ENCODE measurements at regions of chr11 and their contacts with region 1.

Region 1: GRCh38 chr11:63945477-63946163 is 6.8 kb downstream of the NAA40 start:
- DNase-seq: peak; percentile 65 to 78
- ATAC-seq: peak; percentile 88
- H3K4me3 ChIP-seq: peak overlapping the region; percentile 21 to 43 (median 36)
- H3K27ac ChIP-seq: peak overlapping the region; percentile 77 to 91 (median 84)
- H3K4me1 ChIP-seq: peaks cover 24 to 25% of the 10 kb centered on the region in 2 donors
- H3K27me3 ChIP-seq: no peaks in the 10 kb centered on the region
- CTCF ChIP-seq: peak; percentile 79 to 90 (median 85)
- POLR2A ChIP-seq: no peak

Region 2: GRCh38 chr11:63671322-63672155 is 274.1 kb before region 1 on chr11 and contains the start of gene ATL3:
- in situ Hi-C with region 1: no loop called
- intact Hi-C with region 1: loop called (anchors 10 kb)
- DNase-seq: peak; percentile 97 to 98
- ATAC-seq: peak; percentile 88 to 91
- H3K4me3 ChIP-seq: peak within 1 kb of the TSS; percentile 78 to 92 (median 85)
- H3K27ac ChIP-seq: peak within 1 kb of the TSS; percentile 96 to 98 (median 97)
- H3K4me1 ChIP-seq: peaks cover 46 to 48% of the 10 kb centered on the region in 2 donors
- H3K27me3 ChIP-seq: no peaks in the 10 kb centered on the region
- CTCF ChIP-seq: peak in 2 of 5 experiments; percentile 12 to 23
- POLR2A ChIP-seq: peak; percentile 75
- total RNA-seq, gene ATL3: 10.2 to 16.5 (median 12.4) TPM

Region 3: GRCh38 chr11:63768237-63769043 is 177.2 kb before region 1 on chr11 and contains the start of gene ZFTA:
- in situ Hi-C with region 1: loop called in 1 of 4 experiments (anchors 10 kb)
- intact Hi-C with region 1: loop called (anchors 1 kb)
- DNase-seq: peak in 1 of 2 donors; percentile 31
- ATAC-seq: peak; percentile 60 to 70
- H3K4me3 ChIP-seq: peak within 1 kb of the TSS; percentile 67 to 83 (median 72)
- H3K27ac ChIP-seq: peak within 1 kb of the TSS; percentile 69 to 81 (median 77)
- H3K4me1 ChIP-seq: peaks cover 10 to 13% of the 10 kb centered on the region in 2 donors
- H3K27me3 ChIP-seq: no peaks in the 10 kb centered on the region
- CTCF ChIP-seq: peak in 4 of 5 experiments; percentile 90 to 97 (median 95)
- POLR2A ChIP-seq: no peak
- total RNA-seq, gene ZFTA: 6.9 to 18.6 (median 11.8) TPM

Region 4: DNA sequence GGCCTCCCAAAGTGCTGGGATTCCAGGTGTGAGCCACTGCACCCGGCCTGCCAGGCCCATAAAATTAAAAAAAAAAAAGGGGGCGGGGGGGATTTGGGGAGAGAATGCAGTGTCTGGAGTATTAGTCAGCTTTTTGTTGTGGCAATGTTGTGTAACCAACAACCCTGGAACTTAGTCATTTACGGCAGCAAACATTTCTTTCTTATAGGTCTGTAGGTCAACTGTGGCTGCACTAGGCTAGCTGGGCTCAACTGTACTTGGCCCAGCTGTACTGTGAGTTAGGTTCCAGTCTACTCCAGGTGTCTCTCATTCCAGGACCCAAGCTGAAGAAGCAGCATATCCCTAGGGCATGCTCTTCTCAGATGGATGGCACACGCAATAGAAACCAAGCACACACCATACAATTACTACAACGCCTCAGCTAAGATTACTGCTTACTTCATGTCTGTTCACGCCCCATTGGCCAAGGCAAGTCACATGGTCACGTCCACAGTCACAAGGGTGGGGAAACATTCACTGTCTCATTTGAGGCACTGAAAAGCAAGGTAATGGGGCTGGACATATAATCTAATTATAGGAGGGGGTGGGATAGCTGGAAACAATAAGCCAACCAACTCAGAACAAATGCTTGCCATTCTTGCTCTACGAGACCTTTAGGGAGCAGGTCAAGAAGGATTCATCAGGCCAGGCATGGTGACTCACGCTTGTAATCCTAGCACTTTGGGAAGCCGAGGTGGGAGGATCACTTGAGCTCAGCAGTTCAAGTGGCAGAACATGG is 142.8 kb before region 1 on chr11:
- in situ Hi-C with region 1: no loop called
- intact Hi-C with region 1: no loop called
- DNase-seq: peak in 1 of 2 donors; percentile 36
- ATAC-seq: peak; percentile 26 to 91
- H3K4me3 ChIP-seq: no peak overlapping the region
- H3K27ac ChIP-seq: no peak overlapping the region
- H3K4me1 ChIP-seq: peaks cover 0 to 5% of the 10 kb centered on the region in 2 donors
- H3K27me3 ChIP-seq: peaks cover 0 to 3% (median 0%) of the 10 kb centered on the region in 3 donors
- CTCF ChIP-seq: no peak
- POLR2A ChIP-seq: no peak

Region 5: DNA sequence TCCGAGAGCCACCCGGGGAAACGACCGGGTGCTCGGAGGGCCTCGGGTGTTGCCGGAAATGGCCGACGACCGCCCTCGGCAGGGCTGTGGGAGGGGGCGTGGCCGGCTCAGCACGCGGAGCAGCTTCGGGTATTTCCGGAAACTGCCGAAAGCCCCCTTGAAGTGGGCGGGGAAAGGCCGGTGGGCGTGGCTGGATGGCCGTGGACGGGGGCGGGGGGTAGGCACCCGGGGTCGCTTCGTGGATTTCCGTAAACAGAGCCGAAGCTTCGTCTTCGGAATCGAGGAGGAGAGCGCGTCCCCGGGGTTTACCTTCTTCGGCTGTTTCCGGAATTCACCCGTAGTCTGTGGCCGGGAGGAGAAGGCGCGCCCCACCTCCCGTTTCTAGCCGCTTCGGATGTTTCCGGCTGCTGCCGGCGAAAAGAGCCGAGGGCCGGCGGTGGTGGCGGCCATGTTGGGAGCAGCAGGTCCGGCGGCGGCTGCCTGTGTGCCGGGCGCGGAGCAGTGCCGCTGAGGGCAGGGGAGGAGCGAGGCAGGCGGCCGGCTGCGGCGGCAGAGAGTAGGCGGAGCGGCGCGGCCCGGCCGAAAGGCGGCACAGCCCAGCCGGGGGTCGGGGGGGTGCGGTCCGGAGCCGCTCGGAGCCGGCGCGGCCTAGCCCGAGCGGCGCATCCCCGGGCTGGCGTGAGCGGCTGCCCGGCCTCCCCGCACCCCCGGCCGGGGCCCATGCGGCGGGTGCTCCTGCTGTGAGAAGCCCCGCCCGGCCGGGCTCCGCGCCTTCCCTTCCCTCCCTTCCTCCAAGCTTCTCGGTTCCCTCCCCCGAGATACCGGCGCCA is 106.7 kb before region 1 on chr11 and contains the start of gene MARK2:
- in situ Hi-C with region 1: loop called (anchors 5 to 10 kb)
- intact Hi-C with region 1: loop called (anchors 1 kb)
- DNase-seq: peak; percentile 97
- ATAC-seq: peak; percentile 86 to 89
- H3K4me3 ChIP-seq: peak within 1 kb of the TSS; percentile 78 to 99 (median 86)
- H3K27ac ChIP-seq: peak within 1 kb of the TSS; percentile 82 to 94 (median 84)
- H3K4me1 ChIP-seq: peaks cover 35 to 40% of the 10 kb centered on the region in 2 donors
- H3K27me3 ChIP-seq: no peaks in the 10 kb centered on the region
- CTCF ChIP-seq: peak in 1 of 5 experiments; percentile 14
- POLR2A ChIP-seq: peak; percentile 87 to 89
- total RNA-seq, gene MARK2: 17.8 to 37.2 (median 30.3) TPM

Region 6: GRCh38 chr11:63871962-63872799 is 73.4 kb before region 1 on chr11:
- in situ Hi-C with region 1: no loop called
- intact Hi-C with region 1: loop called (anchors 2 kb)
- DNase-seq: peak; percentile 87 to 92
- ATAC-seq: peak; percentile 98
- H3K4me3 ChIP-seq: peak overlapping the region in 3 of 4 donors; percentile 10 to 46 (median 14)
- H3K27ac ChIP-seq: peak overlapping the region; percentile 71 to 86 (median 79)
- H3K4me1 ChIP-seq: peaks cover 53 to 56% of the 10 kb centered on the region in 2 donors
- H3K27me3 ChIP-seq: no peaks in the 10 kb centered on the region
- CTCF ChIP-seq: peak; percentile 42 to 56 (median 53)
- POLR2A ChIP-seq: peak in 1 of 2 donors; percentile 24

Region 7: DNA sequence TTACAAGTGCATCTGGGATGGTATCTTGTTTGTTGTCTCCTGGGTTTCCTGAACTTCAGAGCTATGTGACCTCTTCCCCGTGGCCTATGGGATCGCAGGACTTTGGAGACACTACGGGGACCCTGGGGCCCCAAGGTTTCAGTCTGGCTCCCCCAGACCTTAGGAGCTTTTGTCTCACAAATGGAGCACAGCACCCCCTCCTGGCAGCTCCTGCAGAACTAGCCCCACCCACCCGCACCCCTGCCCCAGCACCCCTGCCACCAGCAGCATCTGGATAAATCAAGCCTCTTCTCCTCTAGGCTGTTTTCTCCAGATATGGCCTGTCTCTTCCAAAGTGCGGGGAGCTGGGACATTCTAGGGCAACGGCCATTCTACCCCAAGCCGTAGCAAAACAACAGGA is 39.0 kb before region 1 on chr11:
- in situ Hi-C with region 1: no loop called
- intact Hi-C with region 1: loop called (anchors 5 kb)
- DNase-seq: no peak
- ATAC-seq: no peak
- H3K4me3 ChIP-seq: no peak overlapping the region
- H3K27ac ChIP-seq: no peak overlapping the region
- H3K4me1 ChIP-seq: no peaks in the 10 kb centered on the region
- H3K27me3 ChIP-seq: no peaks in the 10 kb centered on the region
- CTCF ChIP-seq: peak in 1 of 5 experiments; percentile 43
- POLR2A ChIP-seq: no peak

Region 8: DNA sequence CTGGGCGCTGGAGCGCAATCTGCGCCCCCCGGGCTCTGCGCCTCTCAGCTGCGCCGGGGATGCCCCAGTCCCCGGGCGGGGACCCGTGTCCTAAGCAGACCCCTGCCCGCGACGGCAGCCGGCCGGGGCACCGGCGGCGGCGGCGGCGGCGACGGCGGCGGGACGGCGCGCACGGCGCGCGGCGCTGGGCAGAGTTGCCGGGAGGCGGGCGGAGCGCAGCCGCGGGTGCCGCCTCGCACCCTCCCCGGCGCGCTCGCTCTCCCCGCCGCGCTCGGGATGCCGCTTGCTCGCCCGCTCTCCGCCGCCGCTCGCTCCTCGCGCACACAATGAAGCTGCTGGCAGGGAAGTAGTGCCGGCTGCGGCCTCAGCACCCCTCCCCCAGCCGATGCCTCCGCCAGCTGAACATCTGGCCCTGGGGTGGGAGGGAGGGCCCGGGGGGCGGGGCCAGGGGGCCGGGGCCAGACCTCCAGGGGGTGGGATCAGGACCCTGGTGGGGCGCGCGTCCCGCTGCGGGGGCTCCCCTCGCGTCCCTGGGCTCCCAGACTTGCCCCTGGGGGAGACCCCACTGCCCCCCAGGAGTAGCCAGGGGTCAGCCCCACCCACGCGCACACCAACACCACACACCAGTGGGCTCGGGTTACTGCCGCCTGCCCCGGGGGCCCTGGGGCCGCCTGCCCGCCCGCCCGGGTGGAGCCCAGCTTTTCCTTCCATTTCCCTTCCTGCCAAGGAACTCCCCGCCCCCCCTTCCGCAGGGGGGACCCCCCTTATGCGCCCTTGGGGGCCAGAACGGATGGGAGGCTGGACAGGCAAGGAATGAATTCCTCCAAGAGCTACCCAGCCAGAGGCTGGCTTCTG is 28.6 kb before region 1 on chr11 and contains the start of gene RCOR2:
- in situ Hi-C with region 1: no loop called
- intact Hi-C with region 1: loop called (anchors 1 kb)
- DNase-seq: peak in 1 of 2 donors; percentile 67
- ATAC-seq: peak; percentile 44 to 51
- H3K4me3 ChIP-seq: peak within 1 kb of the TSS; percentile 49 to 66 (median 60)
- H3K27ac ChIP-seq: peak within 1 kb of the TSS; percentile 76 to 85 (median 80)
- H3K4me1 ChIP-seq: peaks cover 28 to 39% of the 10 kb centered on the region in 2 donors
- H3K27me3 ChIP-seq: no peaks in the 10 kb centered on the region
- CTCF ChIP-seq: no peak
- POLR2A ChIP-seq: no peak
- total RNA-seq, gene RCOR2: 0.25 to 1.5 (median 0.45) TPM

Region 9: DNA sequence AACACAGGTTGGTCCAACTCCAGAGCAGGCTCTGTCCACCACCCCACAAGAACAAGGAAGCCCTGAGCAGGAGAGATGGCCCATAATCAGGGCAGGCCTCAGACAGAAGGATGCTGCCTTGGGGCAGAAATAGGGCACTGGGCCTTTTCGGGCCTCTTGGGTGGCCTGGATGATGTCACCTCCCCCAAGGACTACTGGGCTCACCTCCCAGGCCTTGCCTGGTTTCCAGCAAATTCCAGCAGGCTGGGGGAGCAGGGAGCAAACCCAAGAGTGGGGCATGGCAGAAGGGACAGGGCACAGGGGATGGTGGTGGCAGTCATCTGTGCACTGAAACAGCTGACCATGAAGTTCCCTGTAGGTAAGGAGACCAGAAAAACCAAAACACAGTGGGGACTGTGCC is 12.2 kb before region 1 on chr11:
- in situ Hi-C with region 1: no loop called
- intact Hi-C with region 1: no loop called
- DNase-seq: no peak
- ATAC-seq: no peak
- H3K4me3 ChIP-seq: no peak overlapping the region
- H3K27ac ChIP-seq: no peak overlapping the region
- H3K4me1 ChIP-seq: peaks cover 4 to 6% of the 10 kb centered on the region in 2 donors
- H3K27me3 ChIP-seq: no peaks in the 10 kb centered on the region
- CTCF ChIP-seq: no peak
- POLR2A ChIP-seq: no peak

Region 10: DNA sequence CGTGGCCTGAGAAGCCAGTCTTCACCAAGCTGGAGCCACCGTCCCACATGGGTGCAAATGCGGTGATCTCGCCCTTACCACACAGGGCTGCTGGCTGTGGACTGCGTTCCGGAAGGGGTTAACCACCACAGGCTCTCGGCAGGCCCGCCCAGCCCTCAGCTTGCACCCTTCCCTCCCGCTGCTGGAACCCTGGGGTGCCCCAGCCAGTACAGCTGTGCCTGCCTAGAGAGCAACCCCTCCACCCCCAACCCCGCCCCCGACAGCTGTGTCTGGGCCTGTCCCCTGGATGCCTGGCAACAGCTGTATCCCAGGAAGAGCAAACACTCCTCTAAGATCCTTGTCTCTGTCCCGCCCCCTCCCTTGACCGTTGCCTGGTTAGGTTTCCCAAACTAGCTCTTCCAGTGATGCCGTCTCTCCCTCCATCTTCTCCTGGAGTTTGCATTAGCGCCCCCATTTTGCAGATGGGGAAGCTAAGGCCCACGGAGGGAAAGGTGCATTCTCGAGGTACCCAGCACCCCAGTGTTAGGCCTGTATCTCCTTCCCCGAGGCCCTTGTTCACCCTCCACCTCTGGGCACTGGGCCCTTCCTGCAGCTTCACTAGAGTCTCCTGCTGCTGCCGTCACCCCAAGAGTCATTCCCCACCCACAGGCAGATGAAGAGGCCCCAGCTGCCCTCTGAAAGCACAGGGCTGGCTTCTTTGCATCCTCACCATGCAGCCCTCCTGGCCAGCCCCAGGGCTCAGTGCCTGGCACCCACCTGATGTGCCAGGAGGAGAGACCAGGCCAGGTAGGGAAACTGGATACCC is 16.2 kb after region 1 on chr11:
- in situ Hi-C with region 1: no loop called
- intact Hi-C with region 1: no loop called
- DNase-seq: no peak
- ATAC-seq: no peak
- H3K4me3 ChIP-seq: no peak overlapping the region
- H3K27ac ChIP-seq: no peak overlapping the region
- H3K4me1 ChIP-seq: no peaks in the 10 kb centered on the region
- H3K27me3 ChIP-seq: no peaks in the 10 kb centered on the region
- CTCF ChIP-seq: no peak
- POLR2A ChIP-seq: no peak

Region 11: GRCh38 chr11:64000026-64000739 is 54.6 kb after region 1 on chr11:
- in situ Hi-C with region 1: no loop called
- intact Hi-C with region 1: no loop called
- DNase-seq: no peak
- ATAC-seq: peak; percentile 74 to 78
- H3K4me3 ChIP-seq: peak overlapping the region; percentile 7 to 41 (median 33)
- H3K27ac ChIP-seq: peak overlapping the region in 2 of 4 donors; percentile 39 to 51
- H3K4me1 ChIP-seq: peaks cover 18 to 23% of the 10 kb centered on the region in 2 donors
- H3K27me3 ChIP-seq: no peaks in the 10 kb centered on the region
- CTCF ChIP-seq: peak; percentile 71 to 94 (median 92)
- POLR2A ChIP-seq: no peak